AG04449 (cell line): ENCODE measurements at regions of chr4 and their contacts with region 1.

Region 1: DNA sequence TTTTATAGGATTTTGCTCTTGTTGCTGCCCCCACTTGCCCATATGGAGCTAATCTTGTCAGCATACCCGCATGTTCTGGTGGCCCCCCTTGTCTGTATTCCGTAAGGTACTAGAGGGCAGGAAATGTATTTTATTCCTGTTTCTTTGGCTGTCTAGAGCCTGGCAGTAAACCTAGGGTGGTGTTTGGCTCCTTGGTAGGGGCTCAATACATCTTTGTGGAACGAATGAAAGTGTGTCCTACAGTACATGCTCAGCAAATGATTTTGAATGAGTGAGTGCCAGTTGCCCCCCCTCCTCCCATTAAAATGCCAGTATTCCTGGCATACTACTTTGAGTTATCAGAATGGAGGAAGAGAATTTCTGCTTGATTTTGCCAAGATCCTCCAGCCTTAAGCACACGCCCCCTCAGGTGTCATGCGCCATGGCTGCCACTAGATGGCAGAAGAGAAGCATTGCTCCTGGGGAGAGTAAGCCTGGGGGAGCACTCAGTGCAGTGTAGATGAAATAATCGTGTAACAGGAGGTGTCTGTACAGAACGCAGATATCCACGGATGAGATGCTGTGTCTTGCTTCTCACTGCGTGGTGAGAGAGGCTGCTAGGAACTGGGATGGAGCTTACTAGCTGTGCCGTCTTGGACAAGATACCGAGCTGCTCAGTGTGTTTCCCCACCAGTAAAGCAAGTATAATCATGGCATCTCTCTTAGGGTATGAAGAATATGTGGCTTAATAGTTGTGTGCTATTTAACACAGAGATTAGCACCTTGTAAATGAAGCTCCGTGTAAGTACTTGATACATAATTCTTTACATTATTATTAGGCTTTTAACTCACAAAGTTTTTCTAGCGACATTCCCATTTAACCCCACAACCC is 17.2 kb upstream of the RNF212 start:
- DNase-seq: no peak
- H3K4me3 ChIP-seq: no peak overlapping the region
- CTCF ChIP-seq: peak; percentile 99

Region 2: DNA sequence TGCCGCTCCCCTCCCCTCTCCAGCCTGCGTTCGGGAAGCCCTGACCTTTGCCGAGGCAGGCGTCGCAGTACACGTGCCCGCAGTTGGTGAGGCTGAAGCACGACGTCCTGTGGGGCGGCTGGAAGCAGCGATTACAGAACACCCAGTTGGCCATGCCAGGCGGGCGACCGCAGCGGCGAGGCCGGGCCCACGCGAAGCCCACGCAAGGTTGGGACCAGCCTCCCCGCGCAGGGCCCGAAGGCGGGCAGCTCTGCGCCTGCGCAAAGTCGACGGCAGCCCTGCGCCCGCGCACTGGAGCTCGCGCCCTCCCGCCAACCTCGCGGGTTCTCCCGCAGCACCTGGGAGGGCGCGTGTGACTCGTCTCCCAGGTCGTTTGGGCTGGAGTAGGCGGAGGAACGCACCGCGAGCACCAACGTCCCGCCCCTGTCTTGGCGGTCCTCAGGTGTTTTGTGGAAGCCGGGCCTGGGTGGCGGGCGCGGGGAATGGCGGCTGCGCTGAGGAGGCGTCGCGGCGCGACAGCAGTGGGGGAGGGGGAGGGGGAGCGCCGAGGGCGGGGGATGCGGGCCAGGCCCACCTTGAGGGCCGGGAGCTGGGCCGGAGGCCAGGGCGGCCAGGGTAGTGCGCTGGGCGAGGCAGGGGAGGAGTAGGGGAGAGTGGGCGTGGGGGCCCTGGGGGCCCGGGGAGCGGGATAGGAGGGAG is 17.1 kb before region 1 on chr4 and contains the start of gene RNF212:
- CTCF ChIA-PET with region 1: interaction called, 99 read pairs
- POLR2A ChIA-PET with region 1: no interaction called
- DNase-seq: no peak
- H3K4me3 ChIP-seq: peak within 1 kb of the TSS; percentile 51
- CTCF ChIP-seq: no peak

Region 3: DNA sequence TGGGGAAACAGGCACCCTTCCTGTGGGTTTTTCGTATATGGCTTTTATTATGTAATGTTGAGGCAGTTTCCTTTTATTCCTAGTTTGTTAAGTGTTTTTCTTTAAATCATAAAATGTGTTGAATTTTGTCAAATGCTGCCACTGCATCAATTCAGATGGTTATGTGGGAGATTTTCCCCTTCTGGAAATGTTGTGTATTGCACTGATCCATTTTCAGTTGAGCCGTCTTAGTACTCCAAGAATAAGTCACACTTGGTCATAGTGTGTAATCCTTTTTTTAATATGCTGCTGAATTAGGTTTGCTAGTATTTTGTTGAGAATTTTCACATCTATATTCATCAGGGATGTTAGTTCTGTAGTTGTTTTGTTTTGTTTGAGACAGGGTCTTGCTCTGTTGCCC is 127.9 kb after region 1 on chr4:
- CTCF ChIA-PET with region 1: interaction called, 145 read pairs
- POLR2A ChIA-PET with region 1: no interaction called
- DNase-seq: no peak
- H3K4me3 ChIP-seq: no peak overlapping the region
- CTCF ChIP-seq: no peak

Region 4: GRCh38 chr4:1346781-1347409 is 216.3 kb after region 1 on chr4 and contains the start of gene UVSSA:
- CTCF ChIA-PET with region 1: interaction called, 59 read pairs
- POLR2A ChIA-PET with region 1: no interaction called
- DNase-seq: peak; percentile 97
- H3K4me3 ChIP-seq: peak within 1 kb of the TSS; percentile 76
- CTCF ChIP-seq: no peak